ENCODE measurements at regions of chr11 and their contacts with region 1.

Region 1: GRCh38 chr11:11787305-11788062 is 54.3 kb upstream of the USP47 start:
- DNase-seq: peak; percentile 76
- ATAC-seq: peak; percentile 82
- H3K4me3 Mint-ChIP-seq: no peak overlapping the region
- H3K27ac Mint-ChIP-seq: no peak overlapping the region
- H3K4me1 Mint-ChIP-seq: no peaks in the 10 kb centered on the region
- H3K27me3 Mint-ChIP-seq: no peaks in the 10 kb centered on the region
- CTCF ChIP-seq: peak; percentile 92

Region 2: DNA sequence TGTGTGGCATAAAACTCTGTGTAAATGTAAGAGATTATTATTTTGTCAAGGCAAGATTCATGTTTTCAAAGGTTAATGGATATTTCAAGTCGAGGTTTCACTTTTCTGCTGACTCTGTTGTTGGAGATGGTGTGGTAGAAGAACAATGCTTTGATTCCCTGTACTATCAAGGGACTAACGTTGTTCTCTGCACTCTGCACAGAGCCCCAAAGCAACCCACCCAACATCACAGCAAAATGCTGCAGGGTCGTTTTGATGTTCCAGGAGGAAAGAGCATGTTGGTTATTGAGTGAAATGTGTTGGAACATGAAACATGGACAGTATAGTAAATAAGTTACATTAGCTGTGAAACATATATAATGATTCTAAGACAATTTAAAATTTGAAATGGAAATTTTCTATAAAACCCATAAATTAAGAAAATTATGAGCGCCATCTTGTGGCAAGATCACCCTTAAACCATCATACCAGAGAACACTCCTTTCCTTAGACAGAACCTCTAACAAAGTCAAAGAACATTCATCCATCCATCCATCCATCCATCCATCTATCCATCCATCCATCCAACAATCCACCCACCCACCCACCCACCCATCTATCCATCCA is 765.3 kb before region 1 on chr11:
- CTCF ChIA-PET with region 1: interaction called, 63 read pairs
- POLR2A ChIA-PET with region 1: no interaction called
- intact Hi-C with region 1: loop called (anchors 5 kb)
- DNase-seq: peak; percentile 34
- ATAC-seq: no peak
- H3K4me3 Mint-ChIP-seq: no peak overlapping the region
- H3K27ac Mint-ChIP-seq: no peak overlapping the region
- H3K4me1 Mint-ChIP-seq: no peaks in the 10 kb centered on the region
- H3K27me3 Mint-ChIP-seq: no peaks in the 10 kb centered on the region
- CTCF ChIP-seq: no peak

Region 3: DNA sequence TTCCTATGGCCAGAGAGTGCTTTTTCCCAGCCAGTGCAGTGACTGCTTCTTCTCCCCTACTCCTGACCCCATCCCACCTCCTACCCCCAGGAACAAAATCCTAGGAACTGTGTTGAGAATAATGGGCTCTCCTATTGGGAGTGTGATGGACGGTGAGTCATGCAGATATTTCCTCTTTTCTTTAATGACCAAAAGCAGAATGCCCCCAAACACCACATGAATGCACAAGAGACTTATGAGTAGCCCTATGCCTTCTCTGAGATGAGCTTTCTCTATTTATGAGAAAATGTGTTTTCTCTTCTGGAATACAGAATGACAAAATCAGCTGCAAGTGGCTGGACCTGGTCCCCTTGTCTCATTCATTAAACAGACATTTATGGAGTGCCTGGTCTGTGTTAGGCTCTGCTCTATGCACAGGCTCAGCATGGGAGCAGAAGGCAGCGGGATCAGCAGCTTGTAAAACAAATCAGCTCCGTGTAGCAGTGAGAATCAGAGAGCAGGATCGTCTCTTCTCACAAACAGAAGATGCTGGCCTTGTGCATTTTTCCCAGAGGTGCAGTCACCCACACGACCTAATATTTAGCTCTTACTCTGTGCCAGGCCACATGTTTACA is 118.1 kb before region 1 on chr11:
- CTCF ChIA-PET with region 1: no interaction called
- POLR2A ChIA-PET with region 1: no interaction called
- intact Hi-C with region 1: no loop called
- DNase-seq: no peak
- ATAC-seq: no peak
- H3K4me3 Mint-ChIP-seq: no peak overlapping the region
- H3K27ac Mint-ChIP-seq: no peak overlapping the region
- H3K4me1 Mint-ChIP-seq: no peaks in the 10 kb centered on the region
- H3K27me3 Mint-ChIP-seq: peaks cover 16% of the 10 kb centered on the region
- CTCF ChIP-seq: no peak

Region 4: DNA sequence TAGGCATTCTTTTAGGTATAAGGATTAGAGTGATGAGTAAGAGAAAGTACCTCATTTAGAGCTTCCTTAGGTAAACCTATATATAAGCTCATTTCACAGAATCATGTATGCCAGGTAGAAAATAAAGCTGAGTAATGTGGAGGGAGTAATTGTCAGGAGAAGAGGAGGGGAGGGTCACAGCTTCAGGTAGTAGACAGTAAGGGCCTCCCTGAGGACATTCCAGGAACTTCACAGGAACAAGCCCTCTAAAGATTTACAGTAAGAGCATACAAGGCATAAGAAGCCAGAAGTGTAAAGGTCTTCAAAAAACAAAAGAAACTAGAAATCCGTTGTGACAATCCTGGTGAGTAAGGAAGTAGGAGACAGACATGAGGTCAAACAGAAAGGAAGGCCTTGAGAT is 111.9 kb after region 1 on chr11:
- CTCF ChIA-PET with region 1: no interaction called
- POLR2A ChIA-PET with region 1: no interaction called
- intact Hi-C with region 1: no loop called
- DNase-seq: no peak
- ATAC-seq: no peak
- H3K4me3 Mint-ChIP-seq: no peak overlapping the region
- H3K27ac Mint-ChIP-seq: no peak overlapping the region
- H3K4me1 Mint-ChIP-seq: peaks cover 5% of the 10 kb centered on the region
- H3K27me3 Mint-ChIP-seq: no peaks in the 10 kb centered on the region
- CTCF ChIP-seq: no peak

Measured in activated CD8-positive, alpha-beta T cell treated with anti-CD3 and anti-CD28 coated beads for 36 hours (primary cell).